ENCODE measurements at regions of chr12 and their contacts with region 1.

Region 1: DNA sequence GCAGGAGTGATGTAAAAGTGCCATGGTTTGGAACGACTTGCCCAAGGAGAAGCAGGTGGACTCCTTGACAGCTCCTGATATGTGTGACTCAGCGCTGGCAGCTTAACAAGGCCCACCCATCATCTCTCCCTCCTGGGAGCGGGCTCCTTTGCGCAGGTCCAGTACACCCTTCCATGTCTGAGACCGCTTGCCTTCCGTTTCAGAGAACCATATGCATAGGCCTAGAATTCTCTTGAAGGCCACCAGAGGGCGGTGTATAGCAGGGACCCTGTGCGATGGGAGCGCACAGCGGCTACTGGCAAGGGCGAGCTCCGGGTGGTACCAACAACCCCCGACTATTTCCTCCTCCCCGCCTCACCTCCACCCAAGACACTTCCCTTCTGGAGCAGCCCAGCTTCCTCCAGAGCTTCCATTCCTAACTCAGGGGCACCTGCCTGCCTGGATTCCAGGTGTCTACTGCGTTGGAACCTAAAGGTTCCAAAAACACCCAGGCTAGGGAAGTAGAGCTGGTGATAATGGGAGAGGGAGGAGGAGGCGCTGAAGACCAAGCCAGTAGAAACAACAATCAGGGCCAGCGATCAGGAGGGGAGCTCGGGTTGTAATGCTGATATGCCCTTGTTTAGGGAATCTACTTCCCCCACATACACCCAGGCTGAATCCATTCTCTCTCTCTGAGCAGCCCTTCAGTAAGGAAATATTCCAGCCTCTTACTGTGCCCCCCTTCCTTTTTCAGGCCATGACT is 6.2 kb downstream of the DHH start:
- H3K4me3 Mint-ChIP-seq: peak overlapping the region; percentile 48
- H3K27ac Mint-ChIP-seq: no peak overlapping the region
- H3K4me1 Mint-ChIP-seq: peaks cover 45% of the 10 kb centered on the region
- H3K27me3 Mint-ChIP-seq: peaks cover 70% of the 10 kb centered on the region

Region 2: GRCh38 chr12:49121047-49121696 is 32.8 kb after region 1 on chr12:
- intact Hi-C with region 1: loop called (anchors 1 kb)
- H3K4me3 Mint-ChIP-seq: no peak overlapping the region
- H3K27ac Mint-ChIP-seq: no peak overlapping the region
- H3K4me1 Mint-ChIP-seq: no peaks in the 10 kb centered on the region
- H3K27me3 Mint-ChIP-seq: no peaks in the 10 kb centered on the region

Region 3: DNA sequence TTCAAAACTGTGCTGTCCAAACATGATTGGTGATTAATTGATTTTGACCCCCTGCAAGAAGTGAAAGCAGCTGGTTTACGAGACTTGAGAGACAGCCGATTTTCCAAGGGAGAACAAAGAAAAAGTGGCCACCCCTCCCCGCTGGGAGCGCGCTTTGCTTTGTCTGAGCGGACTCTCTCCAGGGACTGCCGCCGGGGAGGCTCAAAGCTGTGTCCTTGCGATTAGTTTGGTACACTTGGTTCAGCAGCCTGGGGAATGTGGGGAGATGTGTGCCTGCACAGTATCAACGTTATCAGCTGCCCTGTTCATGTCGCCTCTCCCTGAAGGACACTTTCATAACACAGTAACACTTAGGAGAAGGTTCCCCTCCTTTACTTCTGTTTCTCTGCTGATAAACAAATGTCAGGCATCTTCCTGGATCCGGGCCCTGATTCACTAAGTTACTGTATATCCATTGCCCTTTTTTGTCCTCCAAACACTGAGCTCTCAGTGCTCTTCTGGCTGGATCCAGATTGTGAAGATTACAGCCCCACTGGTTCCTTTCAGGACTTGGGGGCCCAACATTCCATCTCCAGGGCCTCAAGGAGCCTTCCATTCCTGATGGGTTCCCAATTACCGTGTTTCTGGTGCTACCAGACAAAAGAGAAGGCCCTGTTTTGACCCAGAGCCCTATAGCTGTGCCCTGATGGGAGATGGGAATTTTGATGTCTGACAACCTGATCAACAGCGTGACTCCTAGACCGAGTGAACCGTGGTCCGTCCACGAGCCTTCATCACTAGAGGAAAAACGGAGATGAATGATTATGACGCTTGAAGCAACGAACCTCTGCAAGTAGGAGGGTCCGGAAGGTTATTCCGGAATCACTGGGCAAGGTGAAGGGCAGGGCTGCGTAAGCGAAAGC is 144.8 kb after region 1 on chr12:
- intact Hi-C with region 1: loop called (anchors 1 kb)
- H3K4me3 Mint-ChIP-seq: peak overlapping the region; percentile 77
- H3K27ac Mint-ChIP-seq: peak overlapping the region; percentile 94
- H3K4me1 Mint-ChIP-seq: peaks cover 67% of the 10 kb centered on the region
- H3K27me3 Mint-ChIP-seq: peaks cover 1% of the 10 kb centered on the region